Activated naive CD8-positive, alpha-beta T cell treated with anti-CD3 and anti-CD28 coated beads, Interleukin-2, amount 10 ng/mL, durations not matched to agents 7 days and 5 days (primary cell): ENCODE measurements at regions of chr14 and their contacts with region 1.

Region 1: DNA sequence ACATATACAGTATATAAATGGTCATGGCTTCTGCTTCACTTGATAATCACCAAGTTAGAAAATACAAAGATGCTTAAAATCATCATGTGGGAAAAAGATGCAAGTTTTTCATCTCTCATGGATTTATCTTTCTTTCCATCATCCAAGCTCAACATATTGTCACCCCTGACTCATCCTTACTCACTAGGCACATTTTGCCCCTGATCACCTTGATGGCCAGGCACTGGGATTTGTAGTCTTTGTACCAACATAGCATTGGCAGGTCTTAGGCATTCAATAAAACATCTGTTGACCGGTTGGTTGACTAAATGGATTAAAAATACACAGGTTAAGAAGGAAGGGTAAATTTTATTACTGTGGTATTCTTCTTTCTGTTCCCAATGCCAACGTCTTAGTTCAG is 28.1 kb downstream of the KLHDC2 start:
- DNase-seq: no peak
- ATAC-seq: no peak
- H3K4me3 Mint-ChIP-seq: no peak overlapping the region
- H3K27ac Mint-ChIP-seq: no peak overlapping the region
- H3K4me1 Mint-ChIP-seq: no peaks in the 10 kb centered on the region
- H3K27me3 Mint-ChIP-seq: no peaks in the 10 kb centered on the region

Region 2: GRCh38 chr14:49940808-49941421 is 144.9 kb after region 1 on chr14:
- POLR2A ChIA-PET with region 1: interaction called, 12 read pairs
- DNase-seq: no peak
- ATAC-seq: peak; percentile 48
- H3K4me3 Mint-ChIP-seq: peak overlapping the region; percentile 54
- H3K27ac Mint-ChIP-seq: peak overlapping the region; percentile 74
- H3K4me1 Mint-ChIP-seq: peaks cover 45% of the 10 kb centered on the region
- H3K27me3 Mint-ChIP-seq: no peaks in the 10 kb centered on the region